Panc1 (cell line): ENCODE measurements at regions of chr13 and their contacts with region 1.

Region 1: DNA sequence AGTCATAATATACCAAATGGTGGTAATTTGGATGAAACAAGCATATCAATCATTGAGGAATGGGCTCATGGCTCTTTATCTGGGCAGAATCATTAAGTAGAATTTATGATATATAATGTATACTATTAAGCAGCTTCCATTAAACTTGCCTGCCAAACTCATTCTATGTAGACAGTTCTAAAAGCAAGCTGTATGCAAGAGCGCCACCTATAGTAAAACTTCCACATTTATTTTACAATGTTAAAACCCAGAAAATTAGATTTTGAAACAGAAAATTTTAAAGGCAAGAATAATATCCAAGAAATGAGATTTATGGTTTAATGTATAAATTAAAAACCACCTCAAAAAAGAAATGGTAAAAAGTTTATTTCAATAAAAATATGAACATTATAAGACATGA is 161.5 kb downstream of the MZT1 start:
- DNase-seq: no peak
- ATAC-seq: no peak
- H3K4me3 ChIP-seq: no peak overlapping the region
- H3K27ac ChIP-seq: no peak overlapping the region
- H3K4me1 ChIP-seq: no peaks in the 10 kb centered on the region
- H3K27me3 ChIP-seq: no peaks in the 10 kb centered on the region
- CTCF ChIP-seq: peak; percentile 35; the same call in 1 of the 2 replicates

Region 2: DNA sequence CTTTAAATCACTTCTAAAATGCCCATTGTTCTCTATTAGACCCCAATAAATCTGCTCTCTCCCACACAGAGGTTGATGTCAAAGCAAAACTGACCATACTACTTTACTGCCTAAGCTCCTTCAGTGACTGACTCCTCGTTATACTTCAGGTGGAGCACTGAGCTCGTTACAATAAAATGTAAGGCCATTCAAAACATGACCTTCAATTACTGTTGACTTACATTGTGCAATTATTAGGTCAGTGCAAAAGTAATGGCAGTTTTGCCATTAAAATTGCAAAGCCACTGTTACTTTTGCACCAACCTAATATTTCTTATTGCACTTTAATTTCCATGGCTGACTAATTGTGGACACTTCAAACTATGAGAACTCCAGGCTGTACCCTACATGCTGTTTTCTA is 153.4 kb before region 1 on chr13:
- CTCF ChIA-PET with region 1: no interaction called
- POLR2A ChIA-PET with region 1: no interaction called
- in situ Hi-C with region 1: no loop called
- intact Hi-C with region 1: no loop called
- DNase-seq: no peak
- ATAC-seq: no peak
- H3K4me3 ChIP-seq: no peak overlapping the region
- H3K27ac ChIP-seq: no peak overlapping the region
- H3K4me1 ChIP-seq: no peaks in the 10 kb centered on the region
- H3K27me3 ChIP-seq: no peaks in the 10 kb centered on the region
- CTCF ChIP-seq: no peak

Region 3: DNA sequence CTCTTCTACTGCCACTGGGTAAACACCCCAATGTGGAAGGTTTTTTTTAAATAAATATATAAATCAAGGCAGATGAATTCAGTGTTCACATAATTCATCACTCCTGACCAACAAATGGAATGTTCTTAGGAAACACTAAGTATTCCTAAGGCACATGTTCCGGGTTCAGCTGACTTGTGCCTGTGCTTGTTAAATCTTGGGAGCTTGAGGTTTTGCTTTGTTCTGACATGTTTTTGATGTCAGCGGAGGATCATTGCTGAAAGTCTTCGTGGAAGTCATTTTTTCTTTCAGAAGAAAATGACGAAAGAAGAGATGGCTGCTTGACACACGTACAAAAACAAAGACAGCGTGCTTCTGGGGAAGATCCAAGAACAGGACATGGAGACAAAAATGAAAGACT is 24.2 kb before region 1 on chr13:
- CTCF ChIA-PET with region 1: interaction called, 10 read pairs
- POLR2A ChIA-PET with region 1: no interaction called
- in situ Hi-C with region 1: no loop called
- intact Hi-C with region 1: no loop called
- DNase-seq: no peak
- ATAC-seq: no peak
- H3K4me3 ChIP-seq: no peak overlapping the region
- H3K27ac ChIP-seq: no peak overlapping the region
- H3K4me1 ChIP-seq: no peaks in the 10 kb centered on the region
- H3K27me3 ChIP-seq: no peaks in the 10 kb centered on the region
- CTCF ChIP-seq: no peak